ENCODE measurements at regions of chr2 and their contacts with region 1.

Region 1: GRCh38 chr2:74515981-74516633 is 1.9 kb downstream of the TLX2 start:
- DNase-seq: peak; percentile 72
- H3K4me3 Mint-ChIP-seq: peak overlapping the region; percentile 81
- H3K27ac Mint-ChIP-seq: no peak overlapping the region
- H3K4me1 Mint-ChIP-seq: peaks cover 16% of the 10 kb centered on the region
- H3K27me3 Mint-ChIP-seq: peaks cover 65% of the 10 kb centered on the region

Region 2: GRCh38 chr2:74498500-74499266 is 17.4 kb before region 1 on chr2:
- intact Hi-C with region 1: loop called (anchors 1 kb)
- DNase-seq: no peak
- H3K4me3 Mint-ChIP-seq: peak overlapping the region; percentile 93
- H3K27ac Mint-ChIP-seq: peak overlapping the region; percentile 85
- H3K4me1 Mint-ChIP-seq: peaks cover 48% of the 10 kb centered on the region
- H3K27me3 Mint-ChIP-seq: peaks cover 44% of the 10 kb centered on the region

Measured in activated T-helper 1 cell treated with anti-CD3 and anti-CD28 coated beads, Interleukin-12 subunit alpha, Interleukin-12 subunit beta, Interleukin-2, Interleukin-4 antibody, amounts not matched to agents 30 ng/mL and 10 ng/mL and 1 ng/mL, durations not matched to agents 14 hours and 24 hours and 36 hours (primary cell).